Caco-2 (cell line): ENCODE measurements at regions of chr10 and their contacts with region 1.

Region 1: DNA sequence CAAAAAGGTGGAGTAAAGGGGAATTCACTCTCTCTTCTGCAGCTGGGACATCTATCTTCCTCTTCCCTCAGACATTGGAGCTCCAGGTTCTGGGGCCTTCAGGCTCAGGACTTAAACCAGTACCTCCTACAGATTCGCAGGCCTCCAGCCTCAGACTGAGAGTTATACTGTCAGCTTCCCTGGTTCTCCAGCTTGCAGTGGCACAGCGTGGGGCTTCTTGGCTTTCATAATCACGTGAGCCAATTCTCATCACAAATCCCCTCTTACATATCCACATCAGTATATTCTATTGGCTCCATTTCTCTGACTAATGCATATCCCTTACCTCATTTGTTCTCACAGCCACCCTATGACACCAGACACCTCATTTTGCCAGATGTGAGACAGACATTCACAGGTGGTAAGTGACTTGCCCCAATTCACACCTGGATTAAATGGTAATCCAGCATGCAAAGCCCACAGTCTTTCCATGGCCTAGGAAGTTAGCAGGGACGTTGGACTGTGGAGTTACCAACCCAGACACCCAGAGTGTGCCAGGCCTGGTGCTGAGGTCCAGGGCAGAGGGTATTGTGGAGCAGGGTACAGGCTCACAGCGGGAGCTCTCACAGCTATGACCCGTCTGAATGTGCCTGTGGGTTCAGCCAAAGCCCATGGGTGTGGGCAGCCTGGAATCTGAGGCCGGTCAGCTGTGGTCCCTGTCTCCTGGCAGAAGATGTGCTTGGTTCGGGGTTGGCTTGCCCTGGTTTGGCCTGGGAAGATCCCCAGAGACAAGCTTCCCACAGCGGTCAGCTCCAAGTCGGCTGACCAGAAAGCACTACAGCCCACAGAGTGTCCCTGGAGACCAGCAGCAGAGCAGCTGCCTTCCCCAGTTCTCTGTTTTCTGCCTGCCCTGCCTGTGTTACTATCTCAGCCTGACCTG is 18.4 kb upstream of the ZCCHC24 start:
- DNase-seq: no peak
- H3K4me3 ChIP-seq: no peak overlapping the region
- H3K4me3 Mint-ChIP-seq: no peak overlapping the region
- H3K27ac Mint-ChIP-seq: no peak overlapping the region
- H3K4me1 ChIP-seq: no peaks in the 10 kb centered on the region
- H3K4me1 Mint-ChIP-seq: no peaks in the 10 kb centered on the region
- H3K27me3 ChIP-seq: no peaks in the 10 kb centered on the region
- H3K27me3 Mint-ChIP-seq: no peaks in the 10 kb centered on the region
- CTCF ChIP-seq: no peak

Region 2: GRCh38 chr10:79347226-79347893 is 116.5 kb before region 1 on chr10 and contains the start of gene PPIF:
- CTCF ChIA-PET with region 1: interaction called, 5 read pairs
- POLR2A ChIA-PET with region 1: no interaction called
- intact Hi-C with region 1: loop called (anchors 1 kb)
- DNase-seq: peak; percentile 92 to 97
- H3K4me3 ChIP-seq: peak within 1 kb of the TSS; percentile 90
- H3K4me3 Mint-ChIP-seq: peak within 1 kb of the TSS; percentile 81
- H3K27ac Mint-ChIP-seq: peak within 1 kb of the TSS; percentile 71
- H3K4me1 ChIP-seq: no peaks in the 10 kb centered on the region; the same call in 1 of the 2 replicates
- H3K4me1 Mint-ChIP-seq: no peaks in the 10 kb centered on the region
- H3K27me3 ChIP-seq: no peaks in the 10 kb centered on the region
- H3K27me3 Mint-ChIP-seq: no peaks in the 10 kb centered on the region
- CTCF ChIP-seq: peak; percentile 89 to 92
- total RNA-seq, gene PPIF: 116 and 133 TPM in 2 replicates